Posterior cingulate gyrus (tissue), 11 donors: ENCODE measurements at regions of chr17 and their contacts with region 1.

Region 1: DNA sequence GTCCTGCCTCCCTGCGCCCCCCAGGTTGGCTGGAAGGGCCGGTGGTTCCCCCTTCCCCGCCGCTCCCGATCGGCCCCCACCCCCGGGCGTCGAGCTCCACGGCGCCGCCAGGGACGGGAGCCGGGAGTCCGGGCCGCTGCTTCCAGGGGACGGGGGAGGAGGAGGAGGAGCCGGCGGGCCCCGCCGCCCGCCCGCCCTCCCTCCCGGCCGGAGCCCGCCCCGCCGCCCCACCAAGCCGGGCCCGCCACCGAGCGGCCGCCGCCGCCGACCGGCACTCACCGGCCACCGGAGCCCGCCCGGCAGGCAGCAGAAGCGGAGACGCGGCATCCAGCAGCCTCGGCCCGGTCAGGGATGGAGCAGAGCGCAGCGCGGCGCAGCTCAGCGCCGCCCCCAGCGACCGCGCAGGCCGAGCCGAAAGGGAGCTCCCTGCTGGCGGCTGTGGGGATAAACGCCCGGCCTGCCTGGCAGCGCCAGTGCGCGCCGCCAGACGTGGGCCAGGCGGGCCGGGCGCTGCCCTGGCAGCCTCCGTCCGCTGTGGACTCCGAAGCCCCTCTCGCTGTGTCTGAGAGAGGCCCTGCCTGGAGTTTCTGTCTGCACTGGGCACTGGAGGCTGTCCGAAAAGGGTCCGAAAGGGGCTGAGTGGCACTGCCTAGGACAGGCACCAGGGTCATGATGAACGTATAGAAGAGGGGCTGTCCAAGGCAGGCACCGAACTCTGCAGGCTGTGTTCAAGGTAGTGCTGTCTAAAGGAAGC is at the start of gene MYO18A:
- DNase-seq: peak; percentile 74 to 97 (median 80)

Region 2: DNA sequence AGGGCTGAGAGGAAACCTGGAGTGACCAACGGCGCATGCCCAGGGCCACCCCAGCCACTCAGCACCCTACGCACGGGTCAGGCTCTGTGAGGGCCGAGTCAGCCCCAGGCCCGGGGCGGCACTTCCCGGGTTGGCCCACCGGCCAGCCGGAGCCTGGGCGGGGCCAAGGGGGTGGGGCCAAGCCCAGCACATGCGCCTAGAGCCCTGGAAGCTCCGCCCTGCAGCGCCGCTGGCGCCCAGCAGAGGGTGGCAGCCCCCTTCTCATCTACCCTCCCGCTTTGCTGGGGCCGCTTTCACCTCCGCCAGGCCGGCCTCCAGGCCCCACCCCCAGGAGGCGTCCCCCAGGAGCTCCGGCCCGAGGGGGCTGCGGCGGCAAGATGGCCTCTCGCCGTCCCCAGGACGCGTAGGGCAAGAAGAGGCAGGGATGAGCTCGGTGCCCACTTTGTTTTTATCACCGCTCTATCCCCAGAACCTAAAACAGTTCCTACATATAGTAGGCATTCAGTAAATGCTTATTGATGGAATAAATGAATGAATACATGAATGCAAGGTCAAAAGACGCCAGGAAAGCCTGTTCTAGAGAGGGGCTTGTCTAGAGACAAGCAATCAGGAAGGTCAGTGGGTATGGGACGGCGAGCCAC is 31.3 kb before region 1 on chr17:
- intact Hi-C with region 1: loop called (anchors 1 kb)
- DNase-seq: peak; percentile 86 to 99 (median 92)

Region 3: GRCh38 chr17:29219378-29220047 is 39.3 kb after region 1 on chr17:
- intact Hi-C with region 1: loop called (anchors 5 kb)
- DNase-seq: peak; percentile 63 to 96 (median 87)

Region 4: DNA sequence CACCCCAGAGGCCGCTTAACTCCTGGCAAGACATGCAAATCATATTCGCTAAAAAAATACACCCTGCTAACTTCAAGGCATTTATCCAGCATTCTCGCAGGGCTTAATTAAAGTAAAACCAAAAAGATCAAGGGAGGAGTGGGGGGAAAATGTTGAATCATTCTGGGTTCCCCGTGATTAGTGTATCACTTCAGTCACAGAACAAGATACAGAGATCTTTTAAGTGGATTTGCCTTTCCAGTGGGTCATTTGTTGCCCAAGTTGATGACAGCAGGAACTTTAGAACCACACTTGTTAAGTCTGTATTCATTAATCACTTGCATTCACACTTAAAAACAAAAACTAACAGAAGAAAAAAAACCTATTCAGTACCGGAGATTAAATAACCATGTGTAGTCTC is 83.7 kb after region 1 on chr17:
- intact Hi-C with region 1: no loop called
- DNase-seq: no peak

Region 5: DNA sequence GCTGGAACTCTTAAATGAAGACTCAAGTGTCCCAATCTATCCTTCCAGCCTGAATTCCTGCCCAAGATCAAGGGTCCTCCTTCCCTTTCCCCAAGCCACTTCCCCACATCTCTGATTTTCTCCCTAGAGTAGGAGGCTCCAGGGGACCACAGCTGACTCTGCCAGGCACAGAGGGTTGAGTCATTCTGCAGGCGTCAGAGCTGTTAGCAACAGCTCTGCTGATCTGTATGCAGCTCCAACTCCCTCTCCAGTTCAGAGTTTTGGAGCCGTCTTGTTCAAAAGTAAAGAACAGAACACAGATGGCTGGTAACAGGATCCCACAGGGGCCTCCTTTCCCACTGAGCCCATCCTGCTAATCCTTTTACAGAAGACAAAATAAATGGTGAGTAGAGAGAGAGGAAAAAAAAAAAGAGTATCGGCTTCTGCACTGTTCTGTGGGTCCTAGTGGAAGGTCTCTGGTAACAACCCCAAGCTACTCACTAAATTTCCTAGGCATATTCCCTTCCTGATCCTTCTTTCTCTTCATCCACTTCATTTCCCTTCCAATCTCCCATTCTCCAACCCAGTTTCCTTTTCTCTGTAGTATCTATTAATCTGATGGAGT is 196.6 kb after region 1 on chr17:
- intact Hi-C with region 1: no loop called
- DNase-seq: peak; percentile 77 to 98 (median 84)

Region 6: GRCh38 chr17:29740017-29740416 is 559.8 kb after region 1 on chr17:
- intact Hi-C with region 1: no loop called
- DNase-seq: peak in 1 of 10 donors; percentile 23